ENCODE measurements at regions of chr6 and their contacts with region 1.

Region 1: DNA sequence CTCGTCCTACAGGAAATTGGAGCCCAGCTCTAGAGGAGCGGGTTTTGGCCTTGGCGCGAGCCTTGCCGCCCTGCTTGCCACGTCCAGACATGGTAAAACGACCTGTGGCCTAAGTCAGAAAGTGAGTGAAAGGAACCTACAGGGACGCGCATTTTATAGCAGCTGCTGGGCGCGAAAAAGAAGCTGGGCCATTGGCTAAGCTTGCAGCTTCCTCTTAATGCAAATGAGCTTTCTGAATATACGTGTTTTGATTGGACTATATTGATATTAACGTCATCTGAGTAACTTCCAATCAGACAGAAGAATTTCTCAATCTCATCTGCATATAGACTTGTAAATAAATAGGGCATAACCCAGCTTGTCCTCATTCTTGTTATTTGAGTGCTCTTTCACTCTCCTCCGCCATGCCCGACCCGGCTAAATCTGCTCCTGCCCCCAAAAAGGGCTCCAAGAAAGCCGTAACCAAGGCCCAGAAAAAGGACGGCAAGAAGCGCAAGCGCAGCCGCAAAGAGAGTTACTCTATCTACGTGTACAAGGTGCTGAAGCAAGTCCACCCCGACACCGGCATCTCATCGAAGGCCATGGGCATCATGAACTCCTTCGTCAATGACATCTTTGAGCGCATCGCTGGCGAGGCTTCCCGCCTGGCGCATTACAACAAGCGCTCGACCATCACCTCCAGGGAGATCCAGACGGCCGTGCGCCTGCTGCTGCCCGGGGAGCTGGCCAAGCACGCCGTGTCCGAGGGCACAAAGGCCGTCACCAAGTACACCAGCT is 18.9 kb downstream of the OR2B2 start:
- DNase-seq: peak; percentile 94
- H3K4me3 ChIP-seq: peak overlapping the region; percentile 91
- H3K27ac ChIP-seq: peak overlapping the region; percentile 91
- H3K27me3 ChIP-seq: no peaks in the 10 kb centered on the region
- CTCF ChIP-seq: no peak

Region 2: GRCh38 chr6:26025894-26026832 is 1867.1 kb before region 1 on chr6:
- CTCF ChIA-PET with region 1: interaction called, 4 read pairs
- POLR2A ChIA-PET with region 1: interaction called, 17 read pairs
- DNase-seq: peak; percentile 94
- H3K4me3 ChIP-seq: peak overlapping the region; percentile 78
- H3K27ac ChIP-seq: peak overlapping the region; percentile 91
- H3K27me3 ChIP-seq: no peaks in the 10 kb centered on the region
- CTCF ChIP-seq: peak; percentile 93

Region 3: GRCh38 chr6:27126815-27127537 is 766.3 kb before region 1 on chr6:
- CTCF ChIA-PET with region 1: interaction called, 10 read pairs
- POLR2A ChIA-PET with region 1: interaction called, 40 read pairs
- DNase-seq: peak; percentile 82
- H3K4me3 ChIP-seq: peak overlapping the region; percentile 53
- H3K27ac ChIP-seq: peak overlapping the region; percentile 47
- H3K27me3 ChIP-seq: no peaks in the 10 kb centered on the region
- CTCF ChIP-seq: peak; percentile 91

Region 4: GRCh38 chr6:27177485-27178406 is 715.5 kb before region 1 on chr6:
- CTCF ChIA-PET with region 1: interaction called, 3 read pairs
- POLR2A ChIA-PET with region 1: interaction called, 12 read pairs
- DNase-seq: peak; percentile 85
- H3K4me3 ChIP-seq: peak overlapping the region; percentile 95
- H3K27ac ChIP-seq: peak overlapping the region; percentile 96
- H3K27me3 ChIP-seq: peaks cover 4% of the 10 kb centered on the region
- CTCF ChIP-seq: peak; percentile 52

Region 5: DNA sequence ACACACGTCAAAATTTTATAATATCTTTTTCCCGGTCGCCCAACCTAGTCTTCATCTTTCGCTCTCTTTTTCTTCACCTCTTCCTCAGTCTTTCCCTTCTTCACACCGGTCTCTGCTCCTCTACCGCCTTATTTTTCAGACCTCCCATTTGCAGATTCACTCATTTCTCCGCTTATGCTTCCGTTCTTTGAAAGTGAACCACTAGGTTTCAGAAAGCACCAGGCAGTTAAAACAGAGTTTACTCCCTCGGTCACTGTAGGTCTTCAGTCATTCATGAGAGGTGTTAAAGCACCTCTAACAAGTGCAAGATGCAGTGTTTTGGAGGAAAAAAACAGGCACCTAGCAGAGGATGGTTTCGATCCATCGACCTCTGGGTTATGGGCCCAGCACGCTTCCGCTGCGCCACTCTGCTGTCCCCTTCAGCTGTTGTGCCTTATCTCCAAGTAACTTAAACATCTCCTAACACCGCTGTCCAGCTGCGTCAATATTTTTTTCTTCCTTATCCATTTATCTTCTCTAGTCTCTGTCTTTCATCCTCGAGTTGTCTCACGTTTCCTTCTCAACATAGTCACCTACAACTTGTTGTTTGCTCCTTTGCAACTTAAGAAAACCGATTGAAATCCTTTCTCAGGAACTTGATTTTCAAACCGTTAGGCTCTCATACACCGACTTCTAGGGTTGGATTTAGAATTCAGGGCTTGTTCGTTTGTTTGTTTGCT is 300.6 kb before region 1 on chr6:
- CTCF ChIA-PET with region 1: no interaction called
- POLR2A ChIA-PET with region 1: no interaction called
- DNase-seq: peak; percentile 47
- H3K4me3 ChIP-seq: peak overlapping the region; percentile 17
- H3K27ac ChIP-seq: no peak overlapping the region
- H3K27me3 ChIP-seq: peaks cover 4% of the 10 kb centered on the region
- CTCF ChIP-seq: no peak

Region 6: GRCh38 chr6:27795697-27796494 is 97.4 kb before region 1 on chr6:
- CTCF ChIA-PET with region 1: interaction called, 99 read pairs
- POLR2A ChIA-PET with region 1: interaction called, 4 read pairs
- DNase-seq: peak; percentile 84
- H3K4me3 ChIP-seq: no peak overlapping the region
- H3K27ac ChIP-seq: no peak overlapping the region
- H3K27me3 ChIP-seq: no peaks in the 10 kb centered on the region
- CTCF ChIP-seq: peak; percentile 83

Region 7: GRCh38 chr6:27838058-27838944 is 54.9 kb before region 1 on chr6:
- CTCF ChIA-PET with region 1: interaction called, 45 read pairs
- POLR2A ChIA-PET with region 1: interaction called, 111 read pairs
- DNase-seq: peak; percentile 99
- H3K4me3 ChIP-seq: peak overlapping the region; percentile 83
- H3K27ac ChIP-seq: peak overlapping the region; percentile 100
- H3K27me3 ChIP-seq: no peaks in the 10 kb centered on the region
- CTCF ChIP-seq: no peak

Region 8: GRCh38 chr6:28188111-28188979 is 295.1 kb after region 1 on chr6:
- CTCF ChIA-PET with region 1: no interaction called
- POLR2A ChIA-PET with region 1: no interaction called
- DNase-seq: no peak
- H3K4me3 ChIP-seq: no peak overlapping the region
- H3K27ac ChIP-seq: no peak overlapping the region
- H3K27me3 ChIP-seq: no peaks in the 10 kb centered on the region
- CTCF ChIP-seq: no peak

Region 9: GRCh38 chr6:28252009-28252975 is 359.0 kb after region 1 on chr6 and contains the start of gene ZKSCAN4:
- CTCF ChIA-PET with region 1: no interaction called
- POLR2A ChIA-PET with region 1: no interaction called
- DNase-seq: peak; percentile 86
- H3K4me3 ChIP-seq: peak within 1 kb of the TSS; percentile 94
- H3K27ac ChIP-seq: peak within 1 kb of the TSS; percentile 52
- H3K27me3 ChIP-seq: no peaks in the 10 kb centered on the region
- CTCF ChIP-seq: no peak
- polyA plus RNA-seq, gene ZKSCAN4: 3.7 and 4.7 TPM in 2 replicates

Measured in AG04450 (cell line).